ENCODE measurements at regions of chr10 and their contacts with region 1.

Region 1: GRCh38 chr10:6300106-6300783 is 97.5 kb downstream of the PFKFB3 start:
- DNase-seq: peak; percentile 97
- ATAC-seq: peak; percentile 82
- H3K4me3 ChIP-seq: peak overlapping the region; percentile 34; the same call in 1 of the 2 replicates
- H3K27ac ChIP-seq: peak overlapping the region; percentile 70
- H3K4me1 ChIP-seq: peaks cover 31% of the 10 kb centered on the region
- H3K27me3 ChIP-seq: no peaks in the 10 kb centered on the region
- CTCF ChIP-seq: no peak
- EP300 ChIP-seq: peak; percentile 99 to 100
- POLR2A ChIP-seq: 0 out of 2 replicates have a peak, but pooled peaks have one; percentile 31
- RAD21 ChIP-seq: no peak; the same call in 1 of the 2 replicates

Region 2: DNA sequence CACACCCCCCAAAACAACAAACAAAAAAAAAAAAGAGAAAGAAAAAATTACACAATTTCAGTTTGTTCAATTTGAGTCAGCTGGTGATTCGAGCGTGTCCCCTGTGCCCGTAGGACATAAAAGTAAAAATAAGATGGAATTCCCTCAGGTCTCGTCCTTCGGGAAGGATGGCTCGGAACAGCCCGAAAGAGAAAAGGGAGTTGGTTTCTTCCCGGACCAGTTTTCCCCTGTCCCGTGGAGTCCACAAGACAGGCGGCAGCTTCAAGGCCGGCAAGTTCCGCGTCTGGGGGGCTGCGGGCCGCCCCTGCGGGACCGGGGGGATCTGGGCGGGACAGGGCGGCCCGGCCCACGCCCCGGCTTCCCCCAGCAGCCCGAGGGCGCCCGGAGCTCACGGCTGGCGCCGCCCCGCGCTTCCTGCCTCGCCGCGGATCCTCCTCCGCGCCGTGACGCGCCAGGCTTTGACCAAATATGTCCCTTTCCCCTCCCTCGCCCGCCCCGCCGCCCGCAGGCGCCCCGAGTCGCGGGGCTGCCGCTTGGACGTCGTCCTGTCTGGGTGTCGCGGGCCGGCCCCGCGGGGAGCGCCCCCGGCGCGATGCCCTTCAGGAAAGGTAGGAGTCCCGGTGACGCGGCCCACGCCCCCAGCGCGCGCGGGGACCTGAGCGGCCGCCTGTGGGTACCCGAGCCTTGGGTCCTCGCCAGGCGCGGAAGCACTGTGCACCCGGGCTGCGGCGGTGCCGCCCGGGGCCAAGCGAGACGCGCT is 155.7 kb before region 1 on chr10:
- CTCF ChIA-PET with region 1: no interaction called
- POLR2A ChIA-PET with region 1: no interaction called
- RAD21 ChIA-PET with region 1: interaction called, 3 read pairs
- SMC1A ChIA-PET with region 1: interaction called, 4 read pairs
- in situ Hi-C with region 1: no loop called
- intact Hi-C with region 1: loop called (anchors 2 kb)
- DNase-seq: no peak
- ATAC-seq: peak; percentile 79
- H3K4me3 ChIP-seq: peak overlapping the region; percentile 88
- H3K27ac ChIP-seq: peak overlapping the region; percentile 67
- H3K4me1 ChIP-seq: peaks cover 49% of the 10 kb centered on the region
- H3K27me3 ChIP-seq: no peaks in the 10 kb centered on the region
- CTCF ChIP-seq: peak in 1 of 3 experiments; percentile 15; a peak in 1 of 6 replicates
- EP300 ChIP-seq: no peak
- POLR2A ChIP-seq: peak; percentile 66
- RAD21 ChIP-seq: no peak

Region 3: GRCh38 chr10:6275022-6275997 is 24.9 kb before region 1 on chr10:
- CTCF ChIA-PET with region 1: interaction called, 10 read pairs
- POLR2A ChIA-PET with region 1: interaction called, 15 read pairs
- RAD21 ChIA-PET with region 1: interaction called, 37 read pairs
- SMC1A ChIA-PET with region 1: interaction called, 120 read pairs
- in situ Hi-C with region 1: no loop called
- intact Hi-C with region 1: loop called (anchors 1 kb)
- DNase-seq: peak; percentile 49
- ATAC-seq: peak; percentile 77
- H3K4me3 ChIP-seq: peak overlapping the region; percentile 10; the same call in 1 of the 2 replicates
- H3K27ac ChIP-seq: peak overlapping the region; percentile 51
- H3K4me1 ChIP-seq: peaks cover 28% of the 10 kb centered on the region
- H3K27me3 ChIP-seq: peaks cover 0 to 1% of the 10 kb centered on the region in 2 experiments; a peak in 1 of 4 replicates
- CTCF ChIP-seq: 0 out of 6 replicates have a peak, but pooled peaks of 1 of the 3 experiments have one; percentile 2
- EP300 ChIP-seq: 0 out of 4 replicates have a peak, but pooled peaks have one; percentile 51 to 52
- POLR2A ChIP-seq: peak; percentile 77
- RAD21 ChIP-seq: peak; percentile 10; the same call in 1 of the 2 replicates

Region 4: DNA sequence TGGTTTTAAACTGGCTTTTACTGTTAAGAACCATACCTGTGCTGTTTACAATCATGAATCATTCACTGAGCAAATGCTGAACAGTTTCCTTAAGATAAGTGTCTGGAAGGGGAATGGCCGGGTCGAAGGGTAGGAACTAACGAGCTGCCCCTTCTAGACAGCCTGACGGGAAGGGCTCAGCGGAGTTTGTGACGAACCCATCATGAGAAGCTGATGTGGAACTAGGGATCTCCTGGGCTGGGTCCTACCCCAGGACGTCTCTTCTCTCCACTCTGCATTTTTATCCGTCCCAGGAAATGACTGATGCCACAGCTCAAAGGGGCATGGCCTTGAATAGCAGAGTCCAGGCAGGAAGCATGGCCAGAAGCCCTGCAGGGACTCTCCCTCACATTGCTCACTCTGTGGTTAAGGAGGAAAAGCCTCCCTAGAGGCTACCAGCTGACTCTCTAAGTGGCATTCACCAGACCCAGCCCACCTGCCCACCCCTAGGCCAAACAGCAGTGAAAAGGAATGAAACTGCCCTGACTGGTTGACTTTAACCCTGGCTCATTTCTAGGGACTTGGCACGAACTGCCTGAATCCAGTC is 14.5 kb after region 1 on chr10:
- CTCF ChIA-PET with region 1: interaction called, 9 read pairs
- POLR2A ChIA-PET with region 1: interaction called, 11 read pairs
- RAD21 ChIA-PET with region 1: interaction called, 9 read pairs
- SMC1A ChIA-PET with region 1: interaction called, 63 read pairs
- in situ Hi-C with region 1: no loop called
- intact Hi-C with region 1: no loop called
- DNase-seq: no peak
- ATAC-seq: no peak
- H3K4me3 ChIP-seq: no peak overlapping the region
- H3K27ac ChIP-seq: no peak overlapping the region
- H3K4me1 ChIP-seq: no peaks in the 10 kb centered on the region
- H3K27me3 ChIP-seq: 0 out of 4 replicates have a peak, but pooled peaks cover 0 to 4% of the 10 kb centered on the region in 2 experiments
- CTCF ChIP-seq: no peak
- EP300 ChIP-seq: no peak
- POLR2A ChIP-seq: no peak
- RAD21 ChIP-seq: no peak

Region 5: DNA sequence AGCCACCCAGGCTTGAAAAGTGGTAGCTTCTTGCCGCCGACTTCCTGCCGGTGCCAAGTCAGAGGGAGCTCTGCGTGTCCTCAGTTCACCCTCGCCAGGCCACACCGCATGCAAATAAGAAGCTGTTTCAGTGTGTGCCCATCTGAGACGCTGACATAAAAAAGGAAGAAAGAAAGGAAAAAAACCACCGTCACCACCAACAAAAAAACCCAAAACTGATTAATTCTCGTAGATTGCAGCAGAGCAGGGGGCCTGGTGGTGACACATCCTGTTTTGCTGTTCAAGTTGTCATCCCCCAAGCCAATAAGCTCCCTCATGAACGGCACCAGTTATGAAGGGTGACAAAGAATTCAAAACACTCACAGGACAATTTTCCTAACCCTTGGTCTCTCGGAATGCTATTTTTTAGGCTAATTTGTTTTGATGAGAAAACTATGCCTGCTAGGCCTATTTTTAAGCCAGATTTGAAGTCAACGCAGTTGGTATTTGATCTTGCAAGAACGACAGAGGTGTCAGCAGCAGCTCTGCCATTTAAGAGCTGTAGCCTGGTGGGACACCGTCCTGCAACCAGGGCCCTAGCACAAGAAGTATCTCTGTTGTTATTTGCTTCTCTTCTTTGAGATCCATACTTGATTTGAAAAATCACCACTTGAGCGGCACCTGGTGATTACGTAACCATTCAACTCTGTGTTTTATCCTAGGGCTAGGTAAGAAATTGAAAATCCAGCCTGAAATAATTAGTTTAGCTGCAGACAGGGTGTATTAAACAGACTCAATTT is 48.0 kb after region 1 on chr10:
- CTCF ChIA-PET with region 1: interaction called, 11 read pairs
- POLR2A ChIA-PET with region 1: interaction called, 32 read pairs
- RAD21 ChIA-PET with region 1: interaction called, 71 read pairs
- SMC1A ChIA-PET with region 1: interaction called, 153 read pairs
- in situ Hi-C with region 1: no loop called
- intact Hi-C with region 1: loop called (anchors 1 kb)
- DNase-seq: peak; percentile 93
- ATAC-seq: peak; percentile 95
- H3K4me3 ChIP-seq: peak overlapping the region; percentile 27; the same call in 1 of the 2 replicates
- H3K27ac ChIP-seq: peak overlapping the region; percentile 23
- H3K4me1 ChIP-seq: peaks cover 26% of the 10 kb centered on the region
- H3K27me3 ChIP-seq: no peaks in the 10 kb centered on the region
- CTCF ChIP-seq: no peak
- EP300 ChIP-seq: peak; percentile 96 to 97; a peak in 3 of 4 replicates
- POLR2A ChIP-seq: no peak
- RAD21 ChIP-seq: 0 out of 2 replicates have a peak, but pooled peaks have one; percentile 23

Measured in GM12878 (cell line).